Transverse colon (tissue), 4 donors: ENCODE measurements at regions of chr11 and their contacts with region 1.

Region 1: GRCh38 chr11:45180179-45180842 is 33.9 kb downstream of the PRDM11 start:
- DNase-seq: peak; percentile 73
- H3K4me3 ChIP-seq: peak overlapping the region; percentile 39 to 72 (median 64)
- H3K27ac ChIP-seq: peak overlapping the region; percentile 86 to 93 (median 90)
- H3K4me1 ChIP-seq: peaks cover 3 to 21% (median 15%) of the 10 kb centered on the region in 4 donors
- H3K27me3 ChIP-seq: no peaks in the 10 kb centered on the region
- CTCF ChIP-seq: peak; percentile 49 to 72 (median 56)
- EP300 ChIP-seq: no peak
- POLR2A ChIP-seq: peak; percentile 38

Region 2: GRCh38 chr11:45217991-45218390 is 37.7 kb after region 1 on chr11:
- in situ Hi-C with region 1: no loop called
- intact Hi-C with region 1: loop called (anchors 1 kb)
- DNase-seq: no peak
- H3K4me3 ChIP-seq: no peak overlapping the region
- H3K27ac ChIP-seq: no peak overlapping the region
- H3K4me1 ChIP-seq: no peaks in the 10 kb centered on the region
- H3K27me3 ChIP-seq: no peaks in the 10 kb centered on the region
- CTCF ChIP-seq: no peak
- EP300 ChIP-seq: no peak
- POLR2A ChIP-seq: no peak